ENCODE measurements at regions of chr17 and their contacts with region 1.

Region 1: DNA sequence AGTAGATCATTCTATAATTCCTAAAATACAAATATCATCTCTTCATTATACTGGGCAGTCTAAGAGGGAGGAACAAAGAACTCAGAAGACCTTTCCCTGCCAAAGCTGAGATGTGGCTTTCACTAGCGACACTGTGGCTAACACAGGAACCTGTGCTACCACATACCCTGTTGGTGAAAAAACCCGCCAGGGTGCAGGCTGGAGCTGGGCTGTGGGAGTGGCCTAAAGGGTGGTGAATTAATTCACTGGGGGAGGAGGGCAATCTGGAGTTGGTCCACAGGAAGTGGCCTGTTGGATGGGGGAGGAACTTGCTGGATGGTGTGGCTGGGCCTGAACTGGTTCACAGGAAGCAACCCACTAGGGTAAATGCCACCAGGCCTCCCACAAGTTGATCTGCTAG is 7.4 kb downstream of the ZNF594 start:
- DNase-seq: peak; percentile 57 to 72
- ATAC-seq: peak; percentile 97 to 99 (median 98)
- H3K4me3 ChIP-seq: no peak overlapping the region
- H3K4me3 Mint-ChIP-seq: peak overlapping the region; percentile 74
- H3K27ac ChIP-seq: peak overlapping the region; percentile 33
- H3K27ac Mint-ChIP-seq: peak overlapping the region; percentile 84 to 87
- H3K4me1 ChIP-seq: peaks cover 13% of the 10 kb centered on the region
- H3K4me1 Mint-ChIP-seq: peaks cover 27 to 42% of the 10 kb centered on the region in 2 donors
- H3K27me3 ChIP-seq: no peaks in the 10 kb centered on the region
- H3K27me3 Mint-ChIP-seq: no peaks in the 10 kb centered on the region
- CTCF ChIP-seq: no peak

Region 2: DNA sequence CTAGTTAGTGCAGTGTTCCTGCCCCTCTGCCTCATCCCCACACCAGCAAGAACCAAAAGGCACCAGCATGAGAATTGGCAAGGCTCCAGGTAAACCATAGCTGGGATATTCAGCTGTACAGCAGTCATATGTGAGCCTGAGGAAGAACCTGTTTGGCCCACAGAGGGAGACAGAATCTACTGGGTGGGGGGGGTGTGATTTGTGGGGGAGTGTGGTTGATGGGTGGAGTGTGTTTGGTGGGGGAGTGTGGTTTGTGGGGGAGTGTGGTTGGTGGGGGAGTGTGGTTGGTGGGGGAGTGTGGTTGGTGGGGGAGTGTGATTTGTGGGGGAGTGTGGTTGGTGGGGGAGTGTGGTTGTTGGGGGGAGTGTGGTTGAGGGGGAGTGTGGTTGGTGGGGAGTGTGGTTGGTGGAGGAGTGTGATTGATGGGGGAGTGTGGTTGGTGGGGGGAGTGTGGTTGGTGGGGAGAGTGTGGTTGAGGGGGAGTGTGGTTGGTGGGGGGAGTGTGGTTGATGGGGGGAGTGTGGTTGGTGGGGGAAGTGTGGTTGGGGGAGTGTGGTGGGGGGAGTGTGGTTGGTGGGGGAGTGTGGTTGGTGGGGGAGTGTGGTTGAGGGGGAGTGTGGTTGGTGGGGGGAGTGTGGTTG is 331.6 kb before region 1 on chr17:
- intact Hi-C with region 1: loop called (anchors 5 kb)
- DNase-seq: peak; percentile 21 to 78
- ATAC-seq: peak in 2 of 3 donors; percentile 61 to 75
- H3K4me3 ChIP-seq: no peak overlapping the region
- H3K4me3 Mint-ChIP-seq: peak overlapping the region; percentile 56
- H3K27ac ChIP-seq: no peak overlapping the region
- H3K27ac Mint-ChIP-seq: peak overlapping the region; percentile 82 to 83
- H3K4me1 ChIP-seq: peaks cover 19% of the 10 kb centered on the region
- H3K4me1 Mint-ChIP-seq: peaks cover 41 to 55% of the 10 kb centered on the region in 2 donors
- H3K27me3 ChIP-seq: no peaks in the 10 kb centered on the region
- H3K27me3 Mint-ChIP-seq: peaks cover 0 to 2% of the 10 kb centered on the region in 2 donors
- CTCF ChIP-seq: no peak

Region 3: DNA sequence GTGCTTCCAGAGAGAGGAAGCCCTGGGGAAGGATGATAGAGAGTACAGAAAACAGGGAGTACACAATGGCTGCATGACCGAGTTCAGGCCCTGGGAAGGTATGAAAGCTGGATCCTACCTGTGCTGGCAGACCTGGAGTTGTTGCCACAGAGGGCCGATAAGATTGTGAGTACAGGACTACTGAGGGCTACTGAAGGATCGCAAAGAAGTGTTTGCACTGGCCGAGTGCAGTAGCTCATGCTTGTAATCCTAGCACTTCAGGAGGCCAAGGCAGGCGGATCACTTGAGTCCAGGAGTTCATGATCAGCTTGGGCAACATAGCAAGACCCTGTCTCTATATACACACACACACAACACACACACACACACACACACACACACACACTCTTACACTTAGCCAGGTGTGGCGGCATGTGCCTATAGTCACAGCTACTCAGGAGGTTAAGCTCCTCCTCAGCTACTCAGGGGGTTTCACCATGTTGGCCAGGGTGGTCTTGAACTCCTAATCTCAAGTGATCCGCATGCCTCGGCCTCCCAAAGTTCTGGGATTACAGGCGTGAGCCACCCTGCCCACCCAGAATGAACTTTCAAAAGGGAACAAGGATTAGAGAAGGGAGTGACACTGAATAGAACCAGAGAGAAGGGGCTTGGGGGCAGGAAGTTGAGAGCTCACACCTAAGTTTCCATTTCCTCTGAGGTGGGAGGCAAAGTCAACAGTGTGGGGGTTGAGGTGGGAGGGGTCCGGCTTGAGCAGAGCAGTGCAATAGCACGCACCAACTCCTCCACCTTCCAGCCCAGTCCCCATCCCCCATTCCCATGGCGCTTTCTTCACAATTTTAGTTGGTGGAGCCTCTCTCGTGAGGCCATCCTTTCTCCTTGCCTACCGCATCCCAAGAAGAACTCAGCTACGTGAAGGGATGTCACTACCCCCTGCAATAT is 42.9 kb after region 1 on chr17:
- intact Hi-C with region 1: loop called (anchors 2 kb)
- DNase-seq: peak; percentile 64 to 67
- ATAC-seq: peak; percentile 75 to 87 (median 79)
- H3K4me3 ChIP-seq: no peak overlapping the region
- H3K4me3 Mint-ChIP-seq: peak overlapping the region; percentile 86
- H3K27ac ChIP-seq: peak overlapping the region; percentile 96
- H3K27ac Mint-ChIP-seq: peak overlapping the region; percentile 94 to 98
- H3K4me1 ChIP-seq: peaks cover 97% of the 10 kb centered on the region
- H3K4me1 Mint-ChIP-seq: peaks cover 59 to 79% of the 10 kb centered on the region in 2 donors
- H3K27me3 ChIP-seq: no peaks in the 10 kb centered on the region
- H3K27me3 Mint-ChIP-seq: no peaks in the 10 kb centered on the region
- CTCF ChIP-seq: no peak